ENCODE measurements at regions of chr2 and their contacts with region 1.

Region 1: GRCh38 chr2:136019306-136019705 is 33.9 kb upstream of the DARS1 start:
- DNase-seq: no peak
- ATAC-seq: no peak
- H3K4me3 ChIP-seq: no peak overlapping the region
- H3K27ac ChIP-seq: peak overlapping the region in 3 of 10 donors; percentile 14 to 56 (median 16)
- H3K4me1 ChIP-seq: peaks cover 3 to 66% (median 18%) of the 10 kb centered on the region in 9 donors
- H3K27me3 ChIP-seq: no peaks in the 10 kb centered on the region
- CTCF ChIP-seq: no peak

Region 2: GRCh38 chr2:134739879-134740301 is 1279.4 kb before region 1 on chr2:
- intact Hi-C with region 1: no loop called
- DNase-seq: peak in 1 of 2 donors; percentile 9
- ATAC-seq: peak; percentile 41 to 83 (median 70)
- H3K4me3 ChIP-seq: no peak overlapping the region
- H3K27ac ChIP-seq: peak overlapping the region in 1 of 10 donors; percentile 63
- H3K4me1 ChIP-seq: peaks cover 0 to 32% (median 0%) of the 10 kb centered on the region in 9 donors
- H3K27me3 ChIP-seq: no peaks in the 10 kb centered on the region
- CTCF ChIP-seq: no peak

Region 3: GRCh38 chr2:135052042-135052876 is 967.0 kb before region 1 on chr2 and contains the start of gene RAB3GAP1:
- intact Hi-C with region 1: no loop called
- DNase-seq: peak; percentile 70 to 78
- ATAC-seq: peak; percentile 93 to 96 (median 94)
- H3K4me3 ChIP-seq: peak within 1 kb of the TSS; percentile 50 to 92 (median 82)
- H3K27ac ChIP-seq: peak within 1 kb of the TSS; percentile 80 to 97 (median 93)
- H3K4me1 ChIP-seq: peaks cover 3 to 49% (median 33%) of the 10 kb centered on the region in 9 donors
- H3K27me3 ChIP-seq: no peaks in the 10 kb centered on the region
- CTCF ChIP-seq: no peak
- total RNA-seq, gene RAB3GAP1: 40.7 to 64.2 (median 53.8) TPM

Region 4: GRCh38 chr2:136107051-136108033 is 88.0 kb after region 1 on chr2:
- intact Hi-C with region 1: loop called in 2 of 10 experiments (anchors 10 kb)
- DNase-seq: no peak
- ATAC-seq: no peak
- H3K4me3 ChIP-seq: no peak overlapping the region
- H3K27ac ChIP-seq: peak overlapping the region in 2 of 10 donors; percentile 8 to 23
- H3K4me1 ChIP-seq: peaks cover 0 to 22% (median 0%) of the 10 kb centered on the region in 9 donors
- H3K27me3 ChIP-seq: peaks cover 0 to 3% (median 0%) of the 10 kb centered on the region in 7 donors
- CTCF ChIP-seq: no peak